Posterior vena cava (tissue), 2 donors: ENCODE measurements at regions of chr6 and their contacts with region 1.

Region 1: DNA sequence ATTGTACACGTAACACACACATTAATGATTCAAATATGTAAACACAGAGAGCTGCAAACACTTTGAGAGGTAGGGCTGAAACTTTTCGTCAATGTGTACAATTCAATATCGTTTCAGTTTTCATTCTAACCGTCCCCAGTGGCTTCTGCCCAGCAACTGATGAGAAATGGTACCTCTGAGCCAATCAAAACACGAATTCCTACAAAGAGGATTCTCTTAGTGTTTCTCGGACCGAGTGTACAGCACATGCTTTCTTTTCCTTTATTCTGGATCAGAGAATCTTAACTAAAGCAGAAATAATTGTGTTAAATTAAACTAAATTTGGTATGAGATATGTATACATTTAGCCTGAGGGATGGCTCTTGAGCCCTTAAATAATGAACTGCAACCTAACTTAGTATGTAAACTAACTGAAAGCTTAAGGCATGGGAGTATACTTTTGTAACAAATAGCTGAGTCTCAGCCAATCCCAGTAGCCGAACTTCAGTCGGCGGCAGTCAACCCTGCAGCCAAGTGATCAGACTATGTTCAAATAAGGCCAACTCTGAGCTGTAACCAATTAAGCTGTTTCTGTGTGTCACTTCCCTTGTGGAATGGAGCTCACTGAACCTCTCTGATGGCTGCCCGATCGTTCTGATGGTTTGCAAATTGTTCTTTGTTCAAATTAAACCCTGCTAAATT is 16.1 kb downstream of the BTN2A1 start:
- DNase-seq: peak; percentile 90

Region 2: DNA sequence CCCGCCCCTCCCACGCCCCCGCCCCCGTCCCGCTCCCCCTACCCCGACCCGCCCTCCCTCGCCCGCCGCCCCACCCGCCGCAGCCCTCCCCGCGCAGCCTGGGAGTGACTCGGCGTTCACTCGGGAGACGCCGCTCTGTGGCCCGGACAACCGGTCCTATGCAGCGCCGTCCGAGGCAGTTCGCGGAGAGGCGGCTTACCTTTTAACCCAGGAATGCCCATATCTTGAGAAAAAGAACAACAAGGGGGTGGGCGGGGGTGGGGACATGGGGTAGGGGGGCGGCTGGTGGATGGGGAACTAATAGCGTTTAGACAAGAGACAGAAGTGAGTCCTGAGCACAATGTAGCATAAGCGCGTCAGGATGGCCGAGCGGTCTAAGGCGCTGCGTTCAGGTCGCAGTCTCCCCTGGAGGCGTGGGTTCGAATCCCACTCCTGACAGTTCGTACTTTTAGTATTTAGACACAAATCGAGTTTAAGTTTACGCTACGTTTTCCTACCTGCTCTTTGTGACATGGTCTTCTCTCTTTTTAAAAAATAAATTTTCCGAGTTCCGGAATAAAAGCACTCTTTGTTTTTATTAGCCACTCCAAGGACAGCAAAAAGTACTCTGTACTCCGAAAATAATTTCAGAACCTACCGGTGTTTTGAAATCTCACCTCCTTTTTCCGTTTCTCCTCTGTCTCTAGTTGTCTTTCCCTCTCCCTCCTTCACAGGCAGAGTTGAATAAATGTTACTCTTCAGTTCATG is 47.1 kb after region 1 on chr6:
- intact Hi-C with region 1: loop called in 1 of 2 experiments (anchors 10 kb)
- DNase-seq: peak; percentile 95